ENCODE measurements at regions of chr4 and their contacts with region 1.

Region 1: DNA sequence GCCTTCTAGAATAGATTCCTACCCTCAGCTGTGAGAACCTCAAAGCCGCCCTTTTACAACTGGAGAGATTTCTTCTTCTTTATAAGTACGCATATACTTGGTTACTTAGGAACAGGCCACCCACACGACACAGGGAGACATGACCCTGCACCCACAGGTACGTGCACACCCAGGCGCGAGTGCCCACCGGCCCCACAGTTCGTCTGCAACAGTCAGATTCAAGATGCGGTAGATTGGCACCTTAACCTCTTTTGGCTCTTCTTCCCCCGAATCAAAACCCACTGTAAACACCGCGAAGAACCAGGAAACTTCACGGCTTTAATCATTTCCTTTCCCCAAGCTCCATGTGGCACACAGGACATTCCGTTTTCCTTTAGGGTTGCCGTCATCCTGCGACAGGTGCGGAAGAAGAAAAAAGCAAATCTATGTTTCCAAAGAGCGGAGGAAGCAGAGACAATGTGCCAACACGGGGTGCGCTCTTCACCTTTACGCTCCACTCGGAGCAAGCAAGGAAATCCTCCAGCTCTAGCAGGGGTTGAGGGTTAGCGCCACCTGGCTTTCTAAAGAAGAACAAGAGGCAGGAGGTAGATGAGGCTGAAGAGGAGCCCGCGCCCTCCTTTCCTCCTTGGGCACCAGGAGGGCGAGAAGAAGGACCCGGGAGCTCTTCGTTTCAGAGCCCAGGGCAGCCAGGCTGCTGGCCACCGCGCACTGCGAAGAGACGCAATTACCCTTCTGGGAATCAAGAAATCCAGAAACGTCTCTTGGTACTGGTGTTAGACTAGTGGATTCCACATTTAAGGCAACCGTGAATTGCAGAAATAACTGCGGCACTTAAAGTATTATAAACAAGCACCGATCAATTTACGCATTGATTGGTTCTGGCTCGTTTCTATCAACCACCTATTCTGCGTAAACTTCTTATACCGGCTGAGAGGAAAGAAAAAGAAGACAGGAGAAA is 35.7 kb downstream of the HAND2 start:
- DNase-seq: no peak
- H3K4me3 ChIP-seq: peak overlapping the region; percentile 19; the same call in 1 of the 2 replicates
- H3K27me3 ChIP-seq: peaks cover 10% of the 10 kb centered on the region
- CTCF ChIP-seq: peak; percentile 88

Region 2: GRCh38 chr4:173318648-173319211 is 175.6 kb before region 1 on chr4:
- CTCF ChIA-PET with region 1: interaction called, 18 read pairs
- POLR2A ChIA-PET with region 1: no interaction called
- DNase-seq: no peak
- H3K4me3 ChIP-seq: no peak overlapping the region
- H3K27me3 ChIP-seq: no peaks in the 10 kb centered on the region
- CTCF ChIP-seq: no peak

Region 3: GRCh38 chr4:173370477-173371291 is 123.6 kb before region 1 on chr4 and contains the start of gene SAP30:
- CTCF ChIA-PET with region 1: interaction called, 6 read pairs
- POLR2A ChIA-PET with region 1: interaction called, 11 read pairs
- DNase-seq: peak; percentile 89
- H3K4me3 ChIP-seq: peak within 1 kb of the TSS; percentile 88
- H3K27me3 ChIP-seq: no peaks in the 10 kb centered on the region
- CTCF ChIP-seq: no peak
- polyA plus RNA-seq, gene SAP30: 3.7 and 8.9 TPM in 2 replicates

Region 4: DNA sequence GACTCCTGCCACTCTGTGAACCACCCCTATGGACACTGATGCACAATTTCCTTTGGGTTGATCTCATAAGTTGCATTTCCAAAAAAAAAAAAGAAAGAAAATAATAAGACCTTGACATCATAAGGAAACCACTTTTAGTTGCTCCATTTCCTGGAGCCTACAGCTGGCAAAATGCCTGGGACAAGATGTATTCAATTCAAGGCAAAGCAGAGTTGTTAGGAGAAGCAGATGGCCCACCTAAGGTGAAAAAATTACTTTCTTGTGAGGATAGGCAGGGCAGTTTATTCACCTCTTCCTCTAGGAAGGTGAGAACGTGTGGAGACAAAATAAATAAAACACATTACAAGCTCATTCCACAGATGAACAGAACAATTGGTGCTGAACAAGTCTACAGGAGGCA is 81.3 kb before region 1 on chr4:
- CTCF ChIA-PET with region 1: interaction called, 105 read pairs
- POLR2A ChIA-PET with region 1: no interaction called
- DNase-seq: no peak
- H3K4me3 ChIP-seq: no peak overlapping the region
- H3K27me3 ChIP-seq: no peaks in the 10 kb centered on the region
- CTCF ChIP-seq: no peak

Region 5: GRCh38 chr4:173420324-173420752 is 74.0 kb before region 1 on chr4:
- CTCF ChIA-PET with region 1: interaction called, 105 read pairs
- POLR2A ChIA-PET with region 1: interaction called, 16 read pairs
- DNase-seq: no peak
- H3K4me3 ChIP-seq: no peak overlapping the region
- H3K27me3 ChIP-seq: no peaks in the 10 kb centered on the region
- CTCF ChIP-seq: peak; percentile 38

Region 6: DNA sequence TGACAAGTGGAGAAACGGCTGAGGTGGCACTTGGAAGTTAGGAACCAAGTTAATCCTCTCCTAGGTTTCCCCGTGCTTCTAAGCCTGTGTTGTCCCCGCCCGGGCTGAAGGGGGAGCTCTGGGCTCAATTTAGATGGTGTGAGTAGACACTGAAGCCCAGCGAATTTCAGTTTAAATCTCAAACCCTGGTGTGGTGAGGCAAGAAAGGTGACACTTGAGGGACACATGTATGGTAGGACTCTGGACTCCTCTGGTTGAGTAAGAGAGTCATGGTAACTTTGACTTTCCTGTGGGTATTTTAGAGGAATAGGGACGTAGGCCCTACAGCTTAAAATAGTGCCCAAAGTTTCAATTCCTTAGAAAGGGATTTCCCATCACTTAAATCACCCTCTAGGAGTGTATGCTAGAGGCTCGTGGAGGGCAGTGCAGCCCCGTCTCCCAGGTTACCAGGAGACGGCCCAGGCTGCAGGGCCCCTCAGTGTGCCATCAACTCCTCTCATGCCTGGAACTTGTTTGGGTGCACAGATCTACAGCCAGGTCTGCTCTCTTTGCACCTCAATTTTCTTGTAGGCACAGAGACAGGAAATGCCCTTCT is 11.7 kb after region 1 on chr4:
- CTCF ChIA-PET with region 1: interaction called, 17 read pairs
- POLR2A ChIA-PET with region 1: no interaction called
- DNase-seq: no peak
- H3K4me3 ChIP-seq: no peak overlapping the region
- H3K27me3 ChIP-seq: peaks cover 4% of the 10 kb centered on the region
- CTCF ChIP-seq: peak; percentile 91

Region 7: DNA sequence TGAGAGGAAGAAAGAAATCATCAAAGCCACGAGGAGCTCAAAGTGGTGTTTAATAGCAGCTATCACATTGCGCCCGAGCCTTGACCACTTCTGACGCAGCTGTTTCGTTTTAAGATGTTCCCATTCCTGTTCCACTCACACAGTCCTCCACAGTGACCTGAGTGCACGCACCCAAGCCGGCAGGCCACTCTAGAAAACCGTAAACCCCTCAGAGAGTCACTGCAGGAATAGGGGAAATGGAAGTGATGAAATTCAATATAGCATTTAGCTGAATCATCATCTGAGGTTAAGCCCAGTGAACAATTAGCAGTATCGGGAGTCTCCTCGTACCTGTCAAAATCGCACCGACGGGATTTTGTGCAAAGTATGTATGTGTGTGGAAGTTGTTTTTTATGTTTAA is 53.6 kb after region 1 on chr4:
- CTCF ChIA-PET with region 1: no interaction called
- POLR2A ChIA-PET with region 1: no interaction called
- DNase-seq: no peak
- H3K4me3 ChIP-seq: no peak overlapping the region
- H3K27me3 ChIP-seq: 0 out of 2 replicates have a peak, but pooled peaks cover 2% of the 10 kb centered on the region
- CTCF ChIP-seq: no peak

Region 8: GRCh38 chr4:173958445-173958844 is 464.2 kb after region 1 on chr4:
- CTCF ChIA-PET with region 1: no interaction called
- POLR2A ChIA-PET with region 1: no interaction called
- DNase-seq: no peak
- H3K4me3 ChIP-seq: no peak overlapping the region
- H3K27me3 ChIP-seq: no peaks in the 10 kb centered on the region
- CTCF ChIP-seq: no peak

Measured in BJ (cell line).